ENCODE measurements at regions of chr17 and their contacts with region 1.

Region 1: GRCh38 chr17:49707608-49708514 is at the start of gene SLC35B1:
- DNase-seq: peak; percentile 100
- ATAC-seq: peak; percentile 93
- H3K4me3 ChIP-seq: peak within 1 kb of the TSS; percentile 85 to 92
- H3K27ac ChIP-seq: peak within 1 kb of the TSS; percentile 77
- H3K4me1 ChIP-seq: peaks cover 16 to 21% of the 10 kb centered on the region in 2 experiments
- H3K27me3 ChIP-seq: no peaks in the 10 kb centered on the region
- CTCF ChIP-seq: peak; percentile 96 to 99 (median 98)
- POLR2A ChIP-seq: no peak
- RAD21 ChIP-seq: peak; percentile 74
- total RNA-seq, gene SLC35B1: 87.5 TPM

Region 2: GRCh38 chr17:49315551-49316257 is 392.2 kb before region 1 on chr17:
- CTCF ChIA-PET with region 1: no interaction called
- POLR2A ChIA-PET with region 1: no interaction called
- RAD21 ChIA-PET with region 1: no interaction called
- intact Hi-C with region 1: loop called (anchors 10 kb)
- DNase-seq: peak; percentile 79
- ATAC-seq: peak; percentile 99
- H3K4me3 ChIP-seq: no peak overlapping the region
- H3K27ac ChIP-seq: no peak overlapping the region
- H3K4me1 ChIP-seq: peaks cover 0 to 13% of the 10 kb centered on the region in 2 experiments; a peak in 2 of 4 replicates
- H3K27me3 ChIP-seq: no peaks in the 10 kb centered on the region
- CTCF ChIP-seq: peak; percentile 77 to 96 (median 95)
- POLR2A ChIP-seq: no peak
- RAD21 ChIP-seq: peak; percentile 98

Region 3: DNA sequence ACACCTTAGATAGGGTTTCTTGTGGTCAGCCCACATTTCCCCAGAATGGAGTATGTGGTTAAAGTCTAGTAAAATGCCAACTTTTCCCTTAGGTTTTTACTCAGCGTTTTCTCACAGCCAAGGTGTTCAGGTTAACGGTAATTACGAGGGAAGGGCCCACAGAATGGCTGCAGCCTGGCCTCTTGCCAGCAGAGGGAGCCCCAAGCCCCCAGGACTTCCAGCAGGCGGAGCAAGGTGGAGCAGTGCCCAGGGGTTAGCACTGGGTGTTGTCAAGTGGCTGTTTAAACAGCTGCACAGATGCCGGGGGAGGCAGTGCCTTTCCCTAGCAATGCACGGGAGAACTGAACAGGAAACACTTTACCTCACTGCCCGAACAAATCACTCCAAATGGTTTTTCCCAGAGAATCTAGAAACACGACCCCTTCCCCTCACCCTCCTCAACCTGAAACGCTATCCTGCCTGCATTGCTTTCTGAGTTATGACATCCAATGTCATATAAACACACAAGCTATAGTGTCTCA is 299.8 kb before region 1 on chr17:
- CTCF ChIA-PET with region 1: no interaction called
- POLR2A ChIA-PET with region 1: no interaction called
- RAD21 ChIA-PET with region 1: no interaction called
- intact Hi-C with region 1: loop called (anchors 5 kb)
- DNase-seq: peak; percentile 50
- ATAC-seq: peak; percentile 94
- H3K4me3 ChIP-seq: no peak overlapping the region
- H3K27ac ChIP-seq: no peak overlapping the region
- H3K4me1 ChIP-seq: peaks cover 0 to 3% of the 10 kb centered on the region in 2 experiments; a peak in 3 of 4 replicates
- H3K27me3 ChIP-seq: no peaks in the 10 kb centered on the region
- CTCF ChIP-seq: peak; percentile 99
- POLR2A ChIP-seq: no peak
- RAD21 ChIP-seq: peak; percentile 86

Region 4: GRCh38 chr17:49763735-49764558 is 56.1 kb after region 1 on chr17 and contains the start of gene FAM117A:
- CTCF ChIA-PET with region 1: interaction called, 12 read pairs
- POLR2A ChIA-PET with region 1: interaction called, 30 read pairs
- RAD21 ChIA-PET with region 1: no interaction called
- intact Hi-C with region 1: no loop called
- DNase-seq: peak; percentile 100
- ATAC-seq: peak; percentile 97
- H3K4me3 ChIP-seq: peak within 1 kb of the TSS; percentile 58 to 61
- H3K27ac ChIP-seq: no peak within 1 kb of the TSS; the same call in 1 of the 2 replicates
- H3K4me1 ChIP-seq: peaks cover 8 to 12% of the 10 kb centered on the region in 2 experiments
- H3K27me3 ChIP-seq: peaks cover 17% of the 10 kb centered on the region
- CTCF ChIP-seq: no peak
- POLR2A ChIP-seq: peak; percentile 74
- RAD21 ChIP-seq: no peak
- total RNA-seq, gene FAM117A: 12.8 TPM

Region 5: DNA sequence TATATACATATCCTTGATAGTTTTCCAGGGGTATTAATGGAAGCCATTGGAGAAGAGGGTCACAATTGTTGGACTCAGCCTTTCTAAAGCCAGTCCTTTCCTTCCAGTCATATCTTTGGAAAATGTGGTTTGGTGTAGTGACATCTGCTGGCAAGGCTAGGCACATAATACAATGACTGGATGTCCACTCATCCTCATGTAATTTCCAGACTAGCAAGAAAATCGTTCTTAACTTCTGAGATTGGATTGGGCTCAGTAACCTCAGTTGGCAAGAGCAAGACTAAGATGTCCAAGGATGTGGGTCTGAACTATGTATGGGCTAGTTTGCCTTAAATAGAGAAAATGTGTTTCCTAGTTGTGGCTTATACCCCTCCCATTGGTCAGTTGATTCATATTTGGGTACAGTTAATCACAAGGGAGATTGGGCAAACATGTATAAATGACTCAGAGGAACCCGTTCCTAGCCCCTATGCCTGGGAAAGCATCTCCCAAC is 71.9 kb after region 1 on chr17:
- CTCF ChIA-PET with region 1: interaction called, 6 read pairs
- POLR2A ChIA-PET with region 1: no interaction called
- RAD21 ChIA-PET with region 1: no interaction called
- intact Hi-C with region 1: loop called (anchors 1 kb)
- DNase-seq: peak; percentile 34
- ATAC-seq: peak; percentile 91
- H3K4me3 ChIP-seq: no peak overlapping the region
- H3K27ac ChIP-seq: no peak overlapping the region
- H3K4me1 ChIP-seq: no peaks in the 10 kb centered on the region
- H3K27me3 ChIP-seq: no peaks in the 10 kb centered on the region; the same call in 1 of the 2 replicates
- CTCF ChIP-seq: peak; percentile 73 to 86 (median 73)
- POLR2A ChIP-seq: no peak
- RAD21 ChIP-seq: no peak; the same call in 1 of the 2 replicates

Region 6: GRCh38 chr17:49788478-49789242 is 80.8 kb after region 1 on chr17 and contains the start of gene KAT7:
- CTCF ChIA-PET with region 1: interaction called, 6 read pairs
- POLR2A ChIA-PET with region 1: interaction called, 9 read pairs
- RAD21 ChIA-PET with region 1: no interaction called
- intact Hi-C with region 1: loop called (anchors 2 kb)
- DNase-seq: peak; percentile 100
- ATAC-seq: peak; percentile 93
- H3K4me3 ChIP-seq: peak within 1 kb of the TSS; percentile 86 to 96
- H3K27ac ChIP-seq: peak within 1 kb of the TSS; percentile 98
- H3K4me1 ChIP-seq: peaks cover 13 to 19% of the 10 kb centered on the region in 2 experiments
- H3K27me3 ChIP-seq: no peaks in the 10 kb centered on the region; the same call in 1 of the 2 replicates
- CTCF ChIP-seq: no peak
- POLR2A ChIP-seq: peak; percentile 82
- RAD21 ChIP-seq: no peak
- total RNA-seq, gene KAT7: 79.5 TPM

Region 7: GRCh38 chr17:49798738-49799137 is 90.9 kb after region 1 on chr17:
- CTCF ChIA-PET with region 1: no interaction called
- POLR2A ChIA-PET with region 1: no interaction called
- RAD21 ChIA-PET with region 1: no interaction called
- intact Hi-C with region 1: no loop called
- DNase-seq: no peak
- ATAC-seq: no peak
- H3K4me3 ChIP-seq: no peak overlapping the region
- H3K27ac ChIP-seq: no peak overlapping the region
- H3K4me1 ChIP-seq: no peaks in the 10 kb centered on the region
- H3K27me3 ChIP-seq: no peaks in the 10 kb centered on the region
- CTCF ChIP-seq: no peak
- POLR2A ChIP-seq: no peak
- RAD21 ChIP-seq: no peak

Region 8: DNA sequence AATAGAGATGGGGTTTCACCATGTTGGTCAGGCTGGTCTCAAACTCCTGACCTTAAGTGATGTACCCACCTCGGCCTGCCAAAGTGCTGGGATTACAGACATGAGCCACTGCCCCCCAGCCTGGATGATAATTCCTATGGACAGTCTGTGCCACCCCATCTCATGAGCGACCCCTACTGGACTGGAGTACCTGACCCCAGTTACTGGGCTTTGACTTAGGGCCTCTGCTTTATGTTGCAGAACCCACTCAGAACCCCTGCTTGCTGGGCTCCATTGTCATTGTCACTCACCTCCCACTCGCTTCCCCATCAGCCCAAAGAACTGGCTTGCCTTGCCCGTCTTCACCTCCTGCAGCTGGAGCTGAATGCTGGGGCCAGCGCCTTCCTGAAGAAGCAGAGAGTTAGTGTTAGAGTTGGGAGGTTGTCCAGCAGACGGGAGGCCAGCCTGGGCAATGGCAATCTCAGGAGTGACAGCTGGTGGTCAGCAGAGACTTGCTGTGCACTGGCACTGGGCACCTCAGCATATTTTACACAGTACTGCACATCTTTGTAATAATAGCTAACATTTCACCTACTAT is 136.0 kb after region 1 on chr17:
- CTCF ChIA-PET with region 1: no interaction called
- POLR2A ChIA-PET with region 1: no interaction called
- RAD21 ChIA-PET with region 1: no interaction called
- intact Hi-C with region 1: loop called (anchors 5 kb)
- DNase-seq: no peak
- ATAC-seq: peak; percentile 86
- H3K4me3 ChIP-seq: no peak overlapping the region
- H3K27ac ChIP-seq: no peak overlapping the region
- H3K4me1 ChIP-seq: no peaks in the 10 kb centered on the region
- H3K27me3 ChIP-seq: no peaks in the 10 kb centered on the region
- CTCF ChIP-seq: peak; percentile 43 to 90 (median 79); a peak in 5 of 6 replicates
- POLR2A ChIP-seq: no peak
- RAD21 ChIP-seq: peak; percentile 49

Measured in HCT116 (cell line).